K562 (cell line): ENCODE measurements at regions of chr7 and their contacts with region 1.

Region 1: GRCh38 chr7:121041516-121042148 is 53.1 kb downstream of the CPED1 start:
- DNase-seq: peak in 2 of 4 experiments; percentile 73 to 92
- ATAC-seq: 0 out of 3 replicates have a peak, but pooled peaks have one; percentile 1
- H3K4me3 ChIP-seq: no peak overlapping the region
- H3K27ac ChIP-seq: peak overlapping the region; percentile 88
- H3K4me1 ChIP-seq: peaks cover 10 to 65% of the 10 kb centered on the region in 2 experiments
- H3K27me3 ChIP-seq: no peaks in the 10 kb centered on the region
- CTCF ChIP-seq: no peak
- EP300 ChIP-seq: peak; percentile 97
- POLR2A ChIP-seq: no peak
- RAD21 ChIP-seq: 0 out of 4 replicates have a peak, but pooled peaks of 1 of the 2 experiments have one; percentile 14

Region 2: GRCh38 chr7:120996333-120996987 is 45.2 kb before region 1 on chr7:
- CTCF ChIA-PET with region 1: no interaction called
- POLR2A ChIA-PET with region 1: interaction called, 8 read pairs
- in situ Hi-C with region 1: no loop called
- intact Hi-C with region 1: loop called (anchors 1 kb)
- DNase-seq: peak in 2 of 4 experiments; percentile 64 to 90
- ATAC-seq: peak; percentile 13
- H3K4me3 ChIP-seq: no peak overlapping the region; the same call in 1 of the 2 replicates
- H3K27ac ChIP-seq: peak overlapping the region; percentile 30
- H3K4me1 ChIP-seq: peaks cover 15 to 44% of the 10 kb centered on the region in 2 experiments
- H3K27me3 ChIP-seq: no peaks in the 10 kb centered on the region
- CTCF ChIP-seq: 0 out of 6 replicates have a peak, but pooled peaks of 1 of the 3 experiments have one; percentile 0
- EP300 ChIP-seq: no peak
- POLR2A ChIP-seq: no peak
- RAD21 ChIP-seq: no peak

Region 3: DNA sequence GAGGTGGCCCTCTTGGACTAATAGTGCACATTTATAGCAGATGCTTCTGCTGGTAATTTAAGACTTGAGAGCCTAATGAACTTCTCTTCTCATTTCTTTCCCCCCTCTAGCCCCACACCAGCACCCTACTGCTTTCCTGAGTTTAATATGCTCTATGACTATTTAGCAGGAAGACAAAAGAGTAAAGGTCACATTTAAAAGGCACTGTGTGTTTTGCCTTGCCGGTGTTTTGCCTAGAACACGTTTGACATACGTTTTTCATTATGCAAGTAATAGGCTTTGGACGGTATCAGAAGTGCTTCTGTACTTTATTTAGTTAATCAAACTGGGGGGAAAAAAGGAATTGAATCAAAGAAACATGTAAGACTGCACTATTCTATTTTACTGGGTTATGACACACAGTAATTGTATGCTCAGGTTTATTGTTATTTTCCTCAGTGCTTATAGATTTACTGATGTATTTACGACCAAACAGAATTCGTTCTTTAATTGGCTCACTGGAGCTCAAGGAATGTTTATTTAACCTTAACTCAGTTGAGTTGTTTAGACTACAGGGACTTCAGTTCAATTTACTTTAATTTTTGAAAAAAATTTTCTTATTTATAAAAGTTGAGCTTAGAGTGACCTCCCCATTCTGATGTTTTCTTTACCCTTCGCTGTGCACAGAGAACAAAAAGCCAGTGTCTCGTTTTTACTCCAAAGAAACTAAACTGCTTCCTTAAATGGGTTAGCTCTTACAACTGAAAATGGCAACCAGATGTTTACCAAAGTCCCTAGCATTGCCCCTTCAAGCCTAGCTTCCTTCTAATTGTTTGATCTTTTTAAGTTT is 17.7 kb before region 1 on chr7:
- CTCF ChIA-PET with region 1: no interaction called
- POLR2A ChIA-PET with region 1: interaction called, 21 read pairs
- in situ Hi-C with region 1: no loop called
- intact Hi-C with region 1: no loop called
- DNase-seq: no peak
- ATAC-seq: peak; percentile 62
- H3K4me3 ChIP-seq: no peak overlapping the region
- H3K27ac ChIP-seq: peak overlapping the region; percentile 57
- H3K4me1 ChIP-seq: peaks cover 0 to 59% of the 10 kb centered on the region in 2 experiments; a peak in 3 of 5 replicates
- H3K27me3 ChIP-seq: no peaks in the 10 kb centered on the region
- CTCF ChIP-seq: no peak
- EP300 ChIP-seq: no peak
- POLR2A ChIP-seq: no peak
- RAD21 ChIP-seq: no peak